Psoas muscle (tissue), 8 donors: ENCODE measurements at regions of chr18 and their contacts with region 1.

Region 1: GRCh38 chr18:8084160-8084559 is 517.0 kb downstream of the PTPRM start:
- DNase-seq: no peak
- ATAC-seq: peak in 3 of 4 donors; percentile 53 to 74 (median 58)
- H3K4me3 ChIP-seq: no peak overlapping the region
- H3K27ac ChIP-seq: no peak overlapping the region
- H3K4me1 ChIP-seq: no peaks in the 10 kb centered on the region
- H3K27me3 ChIP-seq: no peaks in the 10 kb centered on the region
- CTCF ChIP-seq: peak; percentile 42

Region 2: GRCh38 chr18:7856733-7857132 is 227.4 kb before region 1 on chr18:
- intact Hi-C with region 1: no loop called
- DNase-seq: no peak
- ATAC-seq: no peak
- H3K4me3 ChIP-seq: no peak overlapping the region
- H3K27ac ChIP-seq: no peak overlapping the region
- H3K4me1 ChIP-seq: peaks cover 32% of the 10 kb centered on the region
- H3K27me3 ChIP-seq: no peaks in the 10 kb centered on the region
- CTCF ChIP-seq: no peak

Region 3: DNA sequence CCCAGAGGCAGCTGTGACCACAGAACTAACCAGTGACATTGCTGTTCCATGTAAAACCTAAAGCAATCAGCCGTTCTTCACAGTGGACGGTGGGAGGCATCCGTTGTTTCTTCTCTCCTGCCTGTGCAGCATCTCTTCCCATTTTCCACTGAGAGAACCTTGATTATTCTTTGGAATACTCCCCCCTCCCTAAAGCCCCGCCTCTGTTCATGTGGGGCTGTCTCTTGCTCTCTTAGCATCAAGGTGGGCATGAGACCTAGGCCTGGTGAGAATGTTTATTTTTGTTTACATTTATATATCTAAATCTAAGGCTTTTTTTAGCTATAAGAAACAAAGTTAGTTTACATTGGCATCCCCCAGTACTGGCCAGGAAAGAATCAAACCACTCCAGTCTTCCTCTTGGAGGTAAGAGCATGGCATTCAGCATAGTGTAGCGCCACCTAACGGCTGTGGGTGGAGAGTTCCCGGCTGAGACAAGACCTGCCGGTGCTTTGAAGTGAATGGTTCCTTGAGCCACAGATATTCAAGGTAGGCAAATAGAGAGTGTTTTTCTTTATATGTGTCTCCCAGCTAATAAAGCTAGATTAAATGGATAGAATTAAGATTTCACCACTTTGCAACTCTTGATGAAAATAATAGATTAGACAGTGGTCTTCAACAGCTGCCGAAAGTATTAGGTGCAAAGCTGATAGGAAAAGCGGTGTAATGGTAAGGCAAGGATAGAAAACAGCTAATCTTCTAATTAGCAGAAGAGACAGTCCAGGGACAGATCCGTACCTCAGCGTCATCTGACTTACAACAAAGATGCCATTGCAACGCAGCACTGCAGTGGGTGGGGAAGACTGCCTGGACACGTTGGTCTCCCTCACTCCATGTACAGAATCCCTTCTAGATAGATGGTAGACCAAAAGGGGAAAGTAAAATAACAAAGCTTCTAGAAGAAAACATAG is 305.5 kb after region 1 on chr18:
- intact Hi-C with region 1: loop called in 1 of 2 experiments (anchors 10 kb)
- DNase-seq: peak; percentile 59 to 76
- ATAC-seq: peak; percentile 75 to 88 (median 86)
- H3K4me3 ChIP-seq: no peak overlapping the region
- H3K27ac ChIP-seq: no peak overlapping the region
- H3K4me1 ChIP-seq: no peaks in the 10 kb centered on the region
- H3K27me3 ChIP-seq: no peaks in the 10 kb centered on the region
- CTCF ChIP-seq: peak; percentile 77

Region 4: DNA sequence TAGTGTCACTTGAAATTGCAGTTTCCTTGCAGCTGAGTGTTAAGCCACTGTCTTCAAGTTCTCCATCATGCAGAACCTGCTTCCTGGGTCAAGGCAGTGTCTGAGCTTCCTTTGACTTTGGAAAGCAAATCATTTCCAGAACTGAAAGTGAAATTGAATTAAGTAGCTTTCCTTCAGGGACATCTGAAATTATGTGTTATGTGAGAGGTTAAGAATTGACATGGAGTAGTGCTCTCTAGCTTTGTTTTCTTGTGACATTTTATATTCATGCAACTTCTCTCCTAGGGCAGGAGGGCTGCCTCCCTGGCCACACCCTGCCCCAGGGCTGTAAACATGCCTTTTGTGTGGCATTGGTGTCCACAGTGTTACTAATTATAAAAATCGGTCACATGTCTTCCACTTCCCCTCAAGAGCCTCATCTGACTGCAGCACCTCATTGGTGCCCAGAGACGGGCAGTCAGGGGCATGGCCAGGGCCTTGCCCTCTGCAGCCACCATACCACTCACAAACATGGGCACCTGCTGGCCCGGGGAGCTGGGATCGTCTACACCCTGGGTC is 539.5 kb after region 1 on chr18:
- intact Hi-C with region 1: no loop called
- DNase-seq: peak in 1 of 2 donors; percentile 62
- ATAC-seq: peak; percentile 69 to 92 (median 84)
- H3K4me3 ChIP-seq: peak overlapping the region; percentile 46
- H3K27ac ChIP-seq: peak overlapping the region; percentile 85
- H3K4me1 ChIP-seq: peaks cover 79% of the 10 kb centered on the region
- H3K27me3 ChIP-seq: no peaks in the 10 kb centered on the region
- CTCF ChIP-seq: no peak